K562 (cell line): ENCODE measurements at regions of chr1 and their contacts with region 1.

Region 1: DNA sequence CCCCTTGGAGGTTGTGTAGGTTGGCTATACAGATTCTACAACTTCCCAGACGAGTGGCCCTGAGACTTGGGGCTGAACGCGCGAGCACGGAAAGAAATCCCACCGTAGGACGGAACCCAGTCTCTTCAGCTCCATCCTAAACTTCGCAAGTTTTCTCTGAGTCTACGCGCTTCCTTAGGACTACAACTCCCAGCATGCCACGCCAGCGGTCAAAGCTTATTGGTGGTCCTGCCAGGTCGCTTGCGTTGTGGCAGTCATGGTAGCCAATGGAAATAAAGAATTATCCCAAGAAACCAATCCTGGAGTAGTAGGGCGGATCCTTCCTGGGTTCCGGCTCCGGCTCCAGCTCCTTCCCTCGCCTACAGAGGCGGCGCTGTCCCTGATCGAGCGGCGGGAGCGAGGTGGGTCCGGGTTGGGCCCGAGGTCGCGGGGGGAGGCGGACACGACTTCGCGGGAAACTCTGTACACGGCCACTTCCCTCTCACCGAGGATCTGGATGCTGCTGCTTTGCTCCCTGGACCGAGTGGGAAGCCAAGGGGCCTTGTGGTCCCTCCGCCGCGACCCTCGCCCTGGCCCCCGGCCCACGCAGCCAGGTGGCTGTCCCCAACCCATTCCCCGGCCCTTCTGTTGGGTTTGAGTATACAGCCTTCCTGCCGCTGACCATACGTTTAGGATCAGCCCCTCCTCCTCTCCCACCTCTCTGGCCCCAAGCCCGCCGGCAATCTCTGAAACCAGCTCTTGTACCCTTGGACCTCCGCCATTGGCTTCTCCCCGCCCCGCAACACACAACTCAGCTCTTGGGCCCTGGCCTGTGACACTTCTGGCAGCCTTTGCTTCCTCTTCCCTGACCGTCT is at the start of gene ZNF691:
- DNase-seq: peak; percentile 98 to 99 (median 98)
- ATAC-seq: peak; percentile 98
- H3K4me3 ChIP-seq: peak within 1 kb of the TSS; percentile 70
- H3K27ac ChIP-seq: peak within 1 kb of the TSS; percentile 83
- H3K4me1 ChIP-seq: peaks cover 18 to 32% of the 10 kb centered on the region in 2 experiments
- H3K27me3 ChIP-seq: no peaks in the 10 kb centered on the region
- CTCF ChIP-seq: peak; percentile 59 to 77 (median 62)
- EP300 ChIP-seq: no peak; the same call in 1 of the 2 replicates
- POLR2A ChIP-seq: peak; percentile 91
- RAD21 ChIP-seq: peak; percentile 5 to 17; a peak in 1 of 4 replicates
- polyA plus RNA-seq, gene ZNF691: 20.0 to 30.4 TPM

Region 2: GRCh38 chr1:42504535-42505128 is 341.9 kb before region 1 on chr1:
- CTCF ChIA-PET with region 1: no interaction called
- POLR2A ChIA-PET with region 1: no interaction called
- in situ Hi-C with region 1: no loop called
- intact Hi-C with region 1: no loop called
- DNase-seq: no peak
- ATAC-seq: no peak
- H3K4me3 ChIP-seq: no peak overlapping the region
- H3K27ac ChIP-seq: no peak overlapping the region
- H3K4me1 ChIP-seq: no peaks in the 10 kb centered on the region
- H3K27me3 ChIP-seq: no peaks in the 10 kb centered on the region
- CTCF ChIP-seq: no peak
- EP300 ChIP-seq: no peak
- POLR2A ChIP-seq: no peak
- RAD21 ChIP-seq: no peak

Region 3: GRCh38 chr1:42766741-42767509 is 79.6 kb before region 1 on chr1 and contains the starts of genes C1orf50 and P3H1:
- CTCF ChIA-PET with region 1: no interaction called
- POLR2A ChIA-PET with region 1: interaction called, 3 read pairs
- in situ Hi-C with region 1: no loop called
- intact Hi-C with region 1: loop called (anchors 5 kb)
- DNase-seq: peak; percentile 96 to 100 (median 96)
- ATAC-seq: peak; percentile 93
- H3K4me3 ChIP-seq: peak within 1 kb of the TSS; percentile 76
- H3K27ac ChIP-seq: peak within 1 kb of the TSS; percentile 81
- H3K4me1 ChIP-seq: peaks cover 12 to 24% of the 10 kb centered on the region in 2 experiments; a peak in 3 of 5 replicates
- H3K27me3 ChIP-seq: no peaks in the 10 kb centered on the region
- CTCF ChIP-seq: peak in 1 of 3 experiments; percentile 10; a peak in 2 of 6 replicates
- EP300 ChIP-seq: no peak; the same call in 1 of the 2 replicates
- POLR2A ChIP-seq: peak; percentile 98
- RAD21 ChIP-seq: no peak
- polyA plus RNA-seq, gene C1orf50: 0.55 to 1.8 TPM
- polyA plus RNA-seq, gene P3H1: 1.7 to 5.0 TPM

Region 4: DNA sequence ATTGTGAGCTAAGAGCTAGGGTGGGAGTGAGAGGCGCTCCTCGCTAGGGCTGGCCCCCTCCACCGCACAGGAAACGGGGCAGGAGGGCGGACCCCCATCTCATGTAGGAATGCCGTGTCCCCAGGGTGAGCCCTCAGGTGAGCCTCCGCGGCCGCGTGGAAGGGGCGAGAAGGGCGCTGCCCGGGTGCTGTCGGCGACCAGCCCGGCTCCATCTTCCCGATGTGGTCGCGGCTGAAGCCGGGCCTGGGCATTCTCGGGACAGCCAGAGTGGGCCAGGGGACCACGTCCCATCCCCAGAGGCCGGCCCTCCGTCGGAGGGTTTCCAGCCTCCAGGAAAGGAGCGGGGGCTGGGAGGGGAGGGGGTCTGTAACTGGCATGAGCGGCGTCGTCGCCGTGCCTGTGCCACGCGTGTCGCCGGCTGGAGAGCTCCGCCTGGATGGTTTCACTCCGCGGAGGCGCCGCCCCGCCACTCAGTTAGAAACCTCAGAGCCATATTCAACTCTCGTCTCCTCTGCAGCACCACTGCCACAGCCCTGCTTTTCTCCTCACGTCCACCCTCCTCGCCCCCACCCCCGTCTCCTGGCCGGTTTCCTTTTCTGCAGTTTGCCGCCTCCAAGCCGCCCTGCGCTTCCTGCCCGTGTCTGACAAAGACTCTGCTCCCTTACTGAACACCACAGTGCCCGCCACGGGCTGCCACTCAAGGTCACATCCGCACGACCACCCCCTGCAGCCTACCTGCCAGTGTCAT is 61.4 kb before region 1 on chr1 and contains the start of gene TMEM269:
- CTCF ChIA-PET with region 1: no interaction called
- POLR2A ChIA-PET with region 1: no interaction called
- in situ Hi-C with region 1: no loop called
- intact Hi-C with region 1: no loop called
- DNase-seq: no peak
- ATAC-seq: no peak
- H3K4me3 ChIP-seq: no peak within 1 kb of the TSS
- H3K27ac ChIP-seq: no peak within 1 kb of the TSS
- H3K4me1 ChIP-seq: peaks cover 0 to 15% of the 10 kb centered on the region in 2 experiments; a peak in 3 of 5 replicates
- H3K27me3 ChIP-seq: no peaks in the 10 kb centered on the region
- CTCF ChIP-seq: no peak
- EP300 ChIP-seq: no peak
- POLR2A ChIP-seq: no peak
- RAD21 ChIP-seq: no peak
- polyA plus RNA-seq, gene TMEM269: 0.18 to 0.21 TPM

Region 5: GRCh38 chr1:42816585-42817434 is 29.7 kb before region 1 on chr1 and contains the starts of genes ERMAP and SVBP:
- CTCF ChIA-PET with region 1: no interaction called
- POLR2A ChIA-PET with region 1: interaction called, 76 read pairs
- in situ Hi-C with region 1: no loop called
- intact Hi-C with region 1: no loop called
- DNase-seq: peak; percentile 93 to 99 (median 99)
- ATAC-seq: peak; percentile 92
- H3K4me3 ChIP-seq: peak within 1 kb of the TSS; percentile 79
- H3K27ac ChIP-seq: peak within 1 kb of the TSS; percentile 99
- H3K4me1 ChIP-seq: peaks cover 16 to 36% of the 10 kb centered on the region in 2 experiments
- H3K27me3 ChIP-seq: no peaks in the 10 kb centered on the region
- CTCF ChIP-seq: peak in 1 of 3 experiments; percentile 27; a peak in 1 of 6 replicates
- EP300 ChIP-seq: peak; percentile 14; the same call in 1 of the 2 replicates
- POLR2A ChIP-seq: peak; percentile 90
- RAD21 ChIP-seq: peak in 1 of 2 experiments; percentile 5; a peak in 1 of 4 replicates
- polyA plus RNA-seq, gene ERMAP: 8.0 to 12.9 TPM
- polyA plus RNA-seq, gene SVBP: 37.9 TPM

Region 6: DNA sequence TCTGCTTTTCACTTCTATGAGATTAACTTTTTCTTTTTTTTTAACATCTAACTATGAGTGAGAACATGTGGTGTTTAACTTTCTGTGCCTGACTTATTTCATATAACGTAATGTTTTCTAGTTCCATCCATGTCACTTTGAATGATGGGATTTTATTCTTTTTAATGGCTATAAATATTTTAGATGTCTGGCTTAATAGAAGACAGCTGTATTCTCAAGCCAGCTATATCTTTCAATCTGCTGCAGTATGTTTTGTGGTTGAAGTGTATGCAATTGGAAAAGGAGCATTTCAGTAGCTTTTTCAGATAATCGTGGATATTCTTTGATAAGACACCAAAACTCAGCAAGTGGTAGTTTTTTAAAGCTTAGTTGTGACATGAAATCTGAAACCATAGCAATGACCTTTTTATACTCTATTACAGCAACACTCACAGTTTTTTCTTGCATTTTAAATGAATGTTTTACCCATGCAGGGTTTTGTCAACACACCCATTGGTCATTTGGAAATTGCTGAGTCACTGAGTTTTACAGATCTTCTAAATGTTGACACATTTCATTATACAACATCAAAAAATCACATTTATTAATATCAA is 23.6 kb before region 1 on chr1:
- CTCF ChIA-PET with region 1: no interaction called
- POLR2A ChIA-PET with region 1: interaction called, 94 read pairs
- in situ Hi-C with region 1: no loop called
- intact Hi-C with region 1: loop called (anchors 2 kb)
- DNase-seq: peak in 2 of 4 experiments; percentile 44 to 63
- ATAC-seq: no peak
- H3K4me3 ChIP-seq: no peak overlapping the region
- H3K27ac ChIP-seq: peak overlapping the region; percentile 73; the same call in 2 of the 3 replicates
- H3K4me1 ChIP-seq: peaks cover 18 to 58% of the 10 kb centered on the region in 2 experiments
- H3K27me3 ChIP-seq: no peaks in the 10 kb centered on the region
- CTCF ChIP-seq: no peak
- EP300 ChIP-seq: peak; percentile 39; the same call in 1 of the 2 replicates
- POLR2A ChIP-seq: no peak
- RAD21 ChIP-seq: no peak

Region 7: DNA sequence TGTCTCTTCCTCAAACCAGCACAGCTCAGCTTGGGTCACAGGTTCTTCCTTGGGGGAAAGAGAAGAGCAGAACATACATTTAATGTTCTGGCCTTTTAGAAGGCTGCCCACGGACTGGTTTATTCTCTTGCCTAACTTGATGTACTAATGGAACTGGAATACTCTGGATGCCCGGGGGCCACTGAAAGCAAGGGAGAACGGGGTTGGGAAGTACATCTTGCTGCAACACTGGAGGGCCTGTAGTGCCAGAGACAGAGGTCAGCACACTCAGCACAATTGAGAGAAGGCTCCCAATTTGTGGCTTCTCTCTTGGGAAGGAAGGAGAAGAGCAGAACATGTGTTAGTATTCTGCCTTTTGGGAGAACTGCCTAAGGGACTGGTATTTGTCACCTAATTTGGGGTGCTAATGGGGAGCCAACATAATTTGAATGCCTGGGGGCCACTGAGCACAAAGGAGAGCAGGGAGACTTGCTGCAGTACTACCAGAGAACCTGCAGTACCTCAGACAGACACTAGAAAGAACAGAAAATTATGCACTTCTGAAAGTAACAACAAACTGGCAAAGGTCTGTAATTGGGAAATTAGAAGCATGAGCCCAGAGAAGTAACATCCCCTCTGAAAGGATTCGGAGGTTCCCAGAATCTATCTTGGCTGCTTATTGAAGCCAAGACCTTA is 14.0 kb after region 1 on chr1:
- CTCF ChIA-PET with region 1: no interaction called
- POLR2A ChIA-PET with region 1: interaction called, 14 read pairs
- in situ Hi-C with region 1: no loop called
- intact Hi-C with region 1: no loop called
- DNase-seq: no peak
- ATAC-seq: 0 out of 3 replicates have a peak, but pooled peaks have one; percentile 37
- H3K4me3 ChIP-seq: no peak overlapping the region
- H3K27ac ChIP-seq: no peak overlapping the region
- H3K4me1 ChIP-seq: no peaks in the 10 kb centered on the region; a peak in 1 of 5 replicates
- H3K27me3 ChIP-seq: peaks cover 0 to 7% of the 10 kb centered on the region in 2 experiments; a peak in 2 of 5 replicates
- CTCF ChIP-seq: no peak
- EP300 ChIP-seq: no peak
- POLR2A ChIP-seq: no peak
- RAD21 ChIP-seq: no peak

Region 8: GRCh38 chr1:43719063-43719462 is 872.6 kb after region 1 on chr1:
- CTCF ChIA-PET with region 1: no interaction called
- POLR2A ChIA-PET with region 1: no interaction called
- in situ Hi-C with region 1: no loop called
- intact Hi-C with region 1: no loop called
- DNase-seq: no peak
- ATAC-seq: 0 out of 3 replicates have a peak, but pooled peaks have one; percentile 23
- H3K4me3 ChIP-seq: no peak overlapping the region
- H3K27ac ChIP-seq: no peak overlapping the region
- H3K4me1 ChIP-seq: peaks cover 3 to 5% of the 10 kb centered on the region in 2 experiments; a peak in 2 of 5 replicates
- H3K27me3 ChIP-seq: no peaks in the 10 kb centered on the region
- CTCF ChIP-seq: no peak
- EP300 ChIP-seq: no peak
- POLR2A ChIP-seq: no peak
- RAD21 ChIP-seq: no peak